Psoas muscle (tissue), 8 donors: ENCODE measurements at regions of chr22 and their contacts with region 1.

Region 1: DNA sequence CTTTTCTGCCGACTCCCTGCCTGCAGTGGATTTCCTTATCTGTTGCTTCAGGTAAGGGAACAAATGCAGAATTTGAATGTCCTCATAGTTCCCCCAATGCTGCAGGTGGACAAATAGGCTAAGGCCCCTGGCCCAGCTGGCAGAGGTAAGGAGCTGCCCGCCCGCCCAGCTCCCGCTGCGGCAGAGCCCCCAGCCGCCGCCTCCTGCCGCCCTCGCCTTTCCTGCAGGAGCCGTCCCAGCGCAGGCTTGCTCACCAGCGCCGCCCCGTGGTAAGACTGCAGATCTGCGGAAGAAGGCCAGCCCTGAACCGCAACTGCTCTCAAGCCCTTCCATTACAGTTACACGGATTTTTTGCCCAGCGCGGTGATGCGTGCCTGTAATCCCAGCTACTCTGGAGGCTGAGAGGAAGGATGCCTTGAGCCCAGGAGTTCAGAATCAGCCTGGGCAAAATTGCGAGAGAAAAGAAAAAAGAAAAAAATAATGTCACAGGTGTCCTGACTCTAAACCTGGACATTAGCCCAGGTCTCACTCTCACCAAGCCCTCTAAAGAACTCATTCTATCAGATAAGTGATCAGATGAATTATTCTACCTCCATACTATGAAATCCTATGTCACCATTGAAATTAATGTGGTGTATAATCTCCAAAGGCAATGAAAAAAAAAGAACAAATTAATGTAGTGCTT is 51.2 kb upstream of the EMID1 start:
- DNase-seq: peak; percentile 71 to 88
- ATAC-seq: peak; percentile 86 to 94 (median 91)
- H3K4me3 ChIP-seq: peak overlapping the region; percentile 54
- H3K27ac ChIP-seq: no peak overlapping the region
- H3K4me1 ChIP-seq: peaks cover 13% of the 10 kb centered on the region
- H3K27me3 ChIP-seq: no peaks in the 10 kb centered on the region
- CTCF ChIP-seq: peak; percentile 97

Region 2: GRCh38 chr22:28855355-28856094 is 299.0 kb before region 1 on chr22:
- intact Hi-C with region 1: loop called (anchors 2 to 10 kb)
- DNase-seq: no peak
- ATAC-seq: peak; percentile 69 to 83 (median 80)
- H3K4me3 ChIP-seq: no peak overlapping the region
- H3K27ac ChIP-seq: no peak overlapping the region
- H3K4me1 ChIP-seq: peaks cover 15% of the 10 kb centered on the region
- H3K27me3 ChIP-seq: no peaks in the 10 kb centered on the region
- CTCF ChIP-seq: peak; percentile 93

Region 3: DNA sequence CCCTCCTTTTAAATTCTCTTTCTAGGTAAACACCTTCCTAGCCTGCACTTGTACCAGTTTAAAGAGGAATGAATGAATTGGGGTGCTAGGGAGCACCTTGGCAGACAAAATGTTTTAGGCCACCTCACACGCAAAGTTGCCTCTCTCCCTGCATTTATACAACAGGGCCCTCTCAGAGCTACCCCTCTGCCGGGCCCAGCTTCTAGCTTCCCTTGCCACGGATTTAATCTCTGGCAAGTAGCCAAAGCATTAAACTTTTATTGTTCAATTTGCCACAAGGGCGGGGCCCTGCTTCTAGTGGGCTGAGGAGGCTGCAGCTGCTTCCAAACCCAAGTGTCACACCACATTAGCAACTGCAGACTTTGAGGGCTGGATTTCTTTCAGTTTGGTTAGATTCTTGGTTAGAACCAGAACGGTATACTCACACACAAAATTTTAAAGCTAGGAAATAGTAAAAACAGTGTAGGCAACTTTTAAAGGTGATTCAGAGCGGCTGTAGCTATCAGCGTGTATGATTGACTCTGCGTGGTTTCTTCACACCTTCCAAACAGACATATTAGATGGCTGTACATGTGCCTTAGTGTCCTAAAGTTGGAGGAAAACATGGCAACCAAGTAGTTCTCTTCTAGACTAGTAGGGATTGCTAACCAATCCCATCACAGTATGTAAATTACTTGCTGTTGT is 75.1 kb before region 1 on chr22:
- intact Hi-C with region 1: loop called in 1 of 2 experiments (anchors 5 kb)
- DNase-seq: no peak
- ATAC-seq: peak in 3 of 4 donors; percentile 33 to 47 (median 34)
- H3K4me3 ChIP-seq: no peak overlapping the region
- H3K27ac ChIP-seq: peak overlapping the region; percentile 48
- H3K4me1 ChIP-seq: peaks cover 27% of the 10 kb centered on the region
- H3K27me3 ChIP-seq: no peaks in the 10 kb centered on the region
- CTCF ChIP-seq: no peak

Region 4: GRCh38 chr22:29093501-29094300 is 60.8 kb before region 1 on chr22:
- intact Hi-C with region 1: loop called in 1 of 2 experiments (anchors 5 kb)
- DNase-seq: peak in 1 of 2 donors; percentile 63
- ATAC-seq: peak; percentile 47 to 87 (median 78)
- H3K4me3 ChIP-seq: no peak overlapping the region
- H3K27ac ChIP-seq: peak overlapping the region; percentile 48
- H3K4me1 ChIP-seq: peaks cover 10% of the 10 kb centered on the region
- H3K27me3 ChIP-seq: no peaks in the 10 kb centered on the region
- CTCF ChIP-seq: no peak

Region 5: DNA sequence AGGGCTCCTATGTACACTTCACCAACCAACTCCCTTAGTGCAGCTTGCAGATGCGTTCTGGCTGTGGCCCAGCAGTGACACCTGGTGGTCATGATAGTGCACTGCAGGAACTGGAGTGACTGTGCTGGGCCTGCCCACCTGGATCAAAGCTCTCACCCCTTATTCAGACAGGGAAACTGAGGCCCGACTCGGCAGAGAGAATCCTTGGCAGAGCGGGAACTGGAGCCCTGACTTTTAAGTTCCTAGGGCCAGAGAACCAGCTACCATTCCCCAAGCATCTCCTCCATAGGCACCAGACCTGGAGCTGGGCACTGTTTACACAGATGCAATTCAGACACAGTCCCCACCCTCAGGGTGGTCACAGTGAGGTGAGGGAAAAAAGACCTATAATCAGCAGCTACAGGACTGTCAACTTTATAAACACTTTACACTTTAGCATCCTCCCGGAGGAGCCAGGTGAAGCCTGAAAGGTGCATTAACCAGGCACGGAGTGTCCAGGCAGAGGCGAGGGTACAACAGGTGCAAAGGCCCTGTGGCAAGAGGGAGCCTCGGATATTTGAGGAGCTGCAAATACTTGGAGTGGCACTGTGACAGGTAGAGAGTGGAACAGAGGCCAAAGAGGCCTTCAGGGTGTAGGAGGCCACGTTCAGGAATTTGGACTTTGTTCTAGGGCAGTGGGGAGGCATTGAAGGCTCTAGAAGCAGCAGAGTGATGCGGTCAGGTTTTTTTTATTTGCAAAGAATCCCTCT is 91.3 kb after region 1 on chr22:
- intact Hi-C with region 1: loop called in 1 of 2 experiments (anchors 5 kb)
- DNase-seq: peak; percentile 63 to 82
- ATAC-seq: peak; percentile 87 to 96 (median 92)
- H3K4me3 ChIP-seq: no peak overlapping the region
- H3K27ac ChIP-seq: no peak overlapping the region
- H3K4me1 ChIP-seq: no peaks in the 10 kb centered on the region
- H3K27me3 ChIP-seq: no peaks in the 10 kb centered on the region
- CTCF ChIP-seq: peak; percentile 96